Activated T-helper 1 cell treated with anti-CD3 and anti-CD28 coated beads, Interleukin-12 subunit alpha, Interleukin-12 subunit beta, Interleukin-2, Interleukin-4 antibody, amounts not matched to agents 30 ng/mL and 10 ng/mL and 1 ng/mL, durations not matched to agents 14 hours and 24 hours and 36 hours (primary cell): ENCODE measurements at regions of chr3 and their contacts with region 1.

Region 1: DNA sequence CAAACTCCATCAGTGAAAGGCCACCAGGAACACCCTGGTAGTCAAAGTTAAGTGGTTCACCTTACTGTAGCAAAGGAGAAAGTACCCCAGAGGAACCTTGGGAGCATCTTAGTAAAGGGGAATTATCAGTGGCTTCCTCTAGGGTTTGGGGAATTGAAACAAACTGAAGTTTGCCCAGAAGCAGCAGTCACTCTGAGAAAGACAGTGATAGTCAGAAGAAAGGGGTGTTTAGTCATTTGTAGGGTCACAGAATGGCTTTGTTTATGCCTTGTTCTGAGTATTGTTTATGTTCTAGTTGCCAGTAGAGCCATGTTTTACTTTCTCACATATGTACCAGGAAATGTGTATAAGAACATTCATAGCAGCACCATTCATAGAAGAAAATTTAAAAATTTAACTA is 93.8 kb downstream of the FHIT start:
- DNase-seq: no peak
- H3K4me3 Mint-ChIP-seq: no peak overlapping the region
- H3K27ac Mint-ChIP-seq: no peak overlapping the region
- H3K4me1 Mint-ChIP-seq: no peaks in the 10 kb centered on the region
- H3K27me3 Mint-ChIP-seq: no peaks in the 10 kb centered on the region

Region 2: DNA sequence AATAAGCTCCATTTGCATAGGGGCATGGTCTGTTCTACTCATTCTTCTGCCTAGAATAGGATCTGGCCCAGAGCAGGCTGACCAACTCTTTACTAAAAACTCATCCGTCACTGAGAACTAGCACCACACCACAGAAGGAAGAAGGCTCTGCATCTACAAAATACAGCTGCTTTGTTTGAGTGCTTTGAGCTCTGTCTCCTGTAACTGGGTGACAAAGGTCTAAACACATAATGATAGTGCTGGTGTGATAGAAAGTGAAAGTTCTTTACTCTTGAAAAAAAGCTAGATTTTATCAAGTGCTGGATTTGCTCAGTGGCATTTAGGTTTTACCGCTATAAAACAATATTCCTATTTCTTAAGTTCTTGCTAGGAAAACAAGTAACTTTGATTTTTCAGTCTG is 46.8 kb before region 1 on chr3:
- intact Hi-C with region 1: loop called (anchors 1 kb)
- DNase-seq: no peak
- H3K4me3 Mint-ChIP-seq: no peak overlapping the region
- H3K27ac Mint-ChIP-seq: peak overlapping the region; percentile 64
- H3K4me1 Mint-ChIP-seq: peaks cover 12% of the 10 kb centered on the region
- H3K27me3 Mint-ChIP-seq: peaks cover 2% of the 10 kb centered on the region